ENCODE measurements at regions of chr9 and their contacts with region 1.

Region 1: DNA sequence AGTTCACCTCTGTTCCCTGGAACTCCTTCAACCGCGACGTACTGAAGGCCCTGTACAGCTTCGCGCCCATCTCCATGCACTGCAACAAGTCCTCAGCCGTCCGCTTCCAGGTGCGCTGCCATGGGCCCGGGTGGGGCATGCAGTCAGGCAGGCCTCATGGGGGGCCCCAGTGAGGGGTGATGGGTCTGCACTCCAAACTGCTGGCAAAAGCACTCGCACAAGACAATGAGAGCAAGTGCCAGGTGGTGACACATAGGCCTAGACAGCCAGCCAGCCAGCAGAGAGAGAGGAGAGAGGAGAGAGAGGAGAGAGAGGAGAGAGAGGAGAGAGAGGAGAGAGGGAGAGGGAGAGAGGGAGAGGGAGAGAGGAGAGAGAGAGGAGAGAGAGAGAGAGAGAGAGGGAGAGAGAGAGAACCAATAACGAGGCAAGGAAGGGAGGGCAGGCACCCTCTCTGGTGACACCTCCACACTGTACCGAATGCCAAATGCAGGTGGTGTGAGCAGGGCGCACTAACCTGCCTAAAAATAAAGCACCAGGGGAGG is 21.0 kb downstream of the DBH start:
- DNase-seq: no peak
- H3K4me3 Mint-ChIP-seq: no peak overlapping the region
- H3K27ac Mint-ChIP-seq: no peak overlapping the region
- H3K4me1 Mint-ChIP-seq: peaks cover 14% of the 10 kb centered on the region
- H3K27me3 Mint-ChIP-seq: peaks cover 76% of the 10 kb centered on the region

Region 2: DNA sequence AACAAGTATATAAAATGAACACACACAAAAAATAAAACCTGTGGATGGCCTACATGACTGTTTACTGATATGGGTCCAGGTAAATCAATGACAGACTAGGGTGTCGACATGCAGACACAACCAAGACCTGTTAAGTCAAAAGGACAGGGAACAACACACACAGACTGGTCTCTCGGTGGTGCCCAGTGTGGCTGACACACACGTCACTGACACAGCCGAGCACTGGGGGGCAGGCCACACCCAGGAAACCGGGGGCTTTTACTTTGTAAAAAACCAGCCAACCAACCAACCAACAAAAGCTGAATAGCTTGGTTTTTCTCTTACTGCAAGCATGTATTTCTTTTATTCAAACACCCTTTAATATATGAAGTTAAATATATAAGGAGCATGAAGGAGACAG is 53.0 kb before region 1 on chr9:
- CTCF ChIA-PET with region 1: no interaction called
- DNase-seq: peak; percentile 44
- H3K4me3 Mint-ChIP-seq: no peak overlapping the region
- H3K27ac Mint-ChIP-seq: no peak overlapping the region
- H3K4me1 Mint-ChIP-seq: no peaks in the 10 kb centered on the region
- H3K27me3 Mint-ChIP-seq: peaks cover 44% of the 10 kb centered on the region

Region 3: GRCh38 chr9:133667759-133668450 is 10.7 kb after region 1 on chr9:
- CTCF ChIA-PET with region 1: no interaction called
- DNase-seq: no peak
- H3K4me3 Mint-ChIP-seq: no peak overlapping the region
- H3K27ac Mint-ChIP-seq: no peak overlapping the region
- H3K4me1 Mint-ChIP-seq: no peaks in the 10 kb centered on the region
- H3K27me3 Mint-ChIP-seq: no peaks in the 10 kb centered on the region

Region 4: GRCh38 chr9:133715866-133716563 is 58.8 kb after region 1 on chr9:
- CTCF ChIA-PET with region 1: interaction called, 18 read pairs
- DNase-seq: peak; percentile 53
- H3K4me3 Mint-ChIP-seq: no peak overlapping the region
- H3K27ac Mint-ChIP-seq: no peak overlapping the region
- H3K4me1 Mint-ChIP-seq: no peaks in the 10 kb centered on the region
- H3K27me3 Mint-ChIP-seq: peaks cover 15% of the 10 kb centered on the region